B cell (primary cell): ENCODE measurements at regions of chr12 and their contacts with region 1.

Region 1: DNA sequence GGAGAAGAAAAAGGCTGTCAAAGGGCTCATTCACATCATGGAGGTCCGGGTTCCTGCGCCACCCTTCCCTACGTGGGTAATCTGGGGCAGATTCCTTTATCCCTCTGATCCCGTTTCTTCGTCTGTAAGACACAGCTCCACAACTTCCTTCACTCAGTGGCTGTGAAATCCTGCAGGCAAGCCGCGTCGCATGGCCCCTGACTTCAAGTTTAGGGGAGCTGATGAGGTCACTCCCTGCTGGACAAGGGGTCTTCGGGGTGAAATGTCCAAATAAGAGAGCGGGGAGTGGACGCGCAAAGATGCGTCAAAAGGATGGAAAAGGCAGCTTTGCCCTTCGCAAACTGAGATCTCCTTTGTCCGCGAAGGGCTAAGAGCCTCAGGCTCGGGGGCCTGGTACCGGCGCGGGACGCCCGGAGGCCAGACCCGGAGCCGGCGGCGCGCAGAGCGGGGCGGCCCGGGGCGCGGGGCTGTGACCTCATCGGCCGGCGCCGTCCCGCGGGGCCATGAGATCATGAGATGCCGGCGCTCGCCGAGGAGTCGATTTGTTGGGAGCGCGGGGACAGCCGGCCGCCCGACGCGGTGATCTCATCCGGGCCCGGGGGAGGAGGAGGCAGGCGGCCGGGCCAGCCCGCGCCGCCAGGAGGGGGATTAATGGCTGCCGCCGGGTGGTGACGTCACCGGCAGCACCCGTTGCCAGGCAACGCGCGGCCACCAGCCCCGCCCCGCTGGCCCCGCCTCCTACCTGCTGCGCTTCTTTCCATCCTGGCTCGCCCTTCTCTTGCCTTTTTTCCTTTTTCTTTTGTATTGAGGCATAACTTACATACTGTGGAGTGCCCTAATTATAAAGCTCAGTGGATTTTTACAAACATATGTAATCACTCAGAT is 62.1 kb downstream of the HRK start:
- DNase-seq: peak; percentile 95
- ATAC-seq: peak; percentile 84
- H3K4me3 ChIP-seq: peak overlapping the region; percentile 82 to 96 (median 95)
- H3K4me3 Mint-ChIP-seq: peak overlapping the region; percentile 87
- H3K27ac ChIP-seq: peak overlapping the region; percentile 93 to 94
- H3K27ac Mint-ChIP-seq: peak overlapping the region; percentile 93
- H3K4me1 ChIP-seq: peaks cover 47 to 49% of the 10 kb centered on the region in 2 donors
- H3K4me1 Mint-ChIP-seq: peaks cover 59% of the 10 kb centered on the region
- H3K27me3 ChIP-seq: no peaks in the 10 kb centered on the region
- H3K27me3 Mint-ChIP-seq: no peaks in the 10 kb centered on the region
- CTCF ChIP-seq: no peak

Region 2: DNA sequence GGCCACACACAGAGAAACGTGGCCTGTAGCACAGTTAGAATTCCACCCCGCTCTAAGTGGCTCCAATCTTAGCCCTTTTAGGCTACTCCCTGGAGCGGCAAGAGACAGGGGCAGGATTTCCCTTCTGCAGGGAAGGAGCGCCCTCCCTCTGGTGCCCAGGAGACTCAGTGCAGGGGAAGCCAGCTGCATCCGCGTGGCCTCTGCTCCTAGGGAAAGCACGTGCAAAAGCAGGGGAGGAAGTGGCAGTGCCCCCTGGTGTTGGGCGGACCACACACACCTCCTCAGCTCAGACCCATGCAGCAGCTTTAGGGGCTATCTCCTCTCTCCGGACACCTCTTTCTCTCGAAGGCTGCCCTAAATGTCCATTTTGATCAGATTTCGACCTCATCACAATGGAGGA is 131.3 kb before region 1 on chr12:
- CTCF ChIA-PET with region 1: no interaction called
- POLR2A ChIA-PET with region 1: no interaction called
- intact Hi-C with region 1: no loop called
- DNase-seq: peak; percentile 63
- ATAC-seq: peak; percentile 85
- H3K4me3 ChIP-seq: peak overlapping the region in 1 of 5 experiments; percentile 23
- H3K4me3 Mint-ChIP-seq: peak overlapping the region; percentile 39
- H3K27ac ChIP-seq: no peak overlapping the region
- H3K27ac Mint-ChIP-seq: no peak overlapping the region
- H3K4me1 ChIP-seq: peaks cover 11 to 16% of the 10 kb centered on the region in 2 donors
- H3K4me1 Mint-ChIP-seq: peaks cover 11% of the 10 kb centered on the region
- H3K27me3 ChIP-seq: peaks cover 0 to 8% (median 6%) of the 10 kb centered on the region in 4 experiments
- H3K27me3 Mint-ChIP-seq: peaks cover 5% of the 10 kb centered on the region
- CTCF ChIP-seq: peak; percentile 61

Region 3: DNA sequence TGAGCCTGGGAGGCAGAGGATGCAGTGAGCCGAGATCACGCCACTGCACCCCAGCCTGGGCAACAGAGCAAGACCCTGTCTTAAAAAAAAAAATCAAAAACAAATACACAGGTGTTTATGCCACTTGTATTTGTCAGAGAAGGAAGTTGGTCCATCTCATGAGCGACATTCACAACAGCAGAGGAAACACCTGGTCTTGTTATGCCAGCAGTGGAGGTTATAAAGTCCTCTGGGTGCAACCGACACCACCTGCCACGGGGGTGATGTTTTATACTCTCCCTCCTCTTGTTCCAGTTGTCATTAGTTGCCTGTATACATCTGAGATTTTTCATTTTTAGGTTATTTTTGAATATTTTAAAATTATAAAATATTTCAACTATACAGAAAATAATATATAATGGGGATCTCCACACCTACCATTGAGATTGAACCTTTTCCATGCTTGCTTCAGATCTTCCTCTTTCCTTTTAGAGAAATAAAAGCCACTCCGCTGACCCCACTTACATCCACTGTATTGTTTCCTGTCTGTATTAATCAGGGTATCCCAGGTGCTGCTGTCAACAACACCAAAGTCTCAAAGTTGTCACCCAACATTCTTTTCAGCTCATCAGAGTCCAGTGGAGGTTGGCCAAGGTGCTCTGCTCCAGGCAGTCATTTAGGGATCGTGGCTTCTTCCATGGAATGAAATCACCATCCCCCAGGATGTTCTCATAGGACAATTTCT is 16.0 kb before region 1 on chr12:
- CTCF ChIA-PET with region 1: interaction called, 6 read pairs
- POLR2A ChIA-PET with region 1: interaction called, 9 read pairs
- intact Hi-C with region 1: loop called (anchors 1 kb)
- DNase-seq: peak; percentile 80
- ATAC-seq: peak; percentile 85
- H3K4me3 ChIP-seq: peak overlapping the region in 1 of 5 experiments; percentile 22
- H3K4me3 Mint-ChIP-seq: peak overlapping the region; percentile 59
- H3K27ac ChIP-seq: peak overlapping the region; percentile 92 to 93
- H3K27ac Mint-ChIP-seq: peak overlapping the region; percentile 95
- H3K4me1 ChIP-seq: peaks cover 33 to 46% of the 10 kb centered on the region in 2 donors
- H3K4me1 Mint-ChIP-seq: peaks cover 51% of the 10 kb centered on the region
- H3K27me3 ChIP-seq: no peaks in the 10 kb centered on the region
- H3K27me3 Mint-ChIP-seq: no peaks in the 10 kb centered on the region
- CTCF ChIP-seq: no peak

Region 4: DNA sequence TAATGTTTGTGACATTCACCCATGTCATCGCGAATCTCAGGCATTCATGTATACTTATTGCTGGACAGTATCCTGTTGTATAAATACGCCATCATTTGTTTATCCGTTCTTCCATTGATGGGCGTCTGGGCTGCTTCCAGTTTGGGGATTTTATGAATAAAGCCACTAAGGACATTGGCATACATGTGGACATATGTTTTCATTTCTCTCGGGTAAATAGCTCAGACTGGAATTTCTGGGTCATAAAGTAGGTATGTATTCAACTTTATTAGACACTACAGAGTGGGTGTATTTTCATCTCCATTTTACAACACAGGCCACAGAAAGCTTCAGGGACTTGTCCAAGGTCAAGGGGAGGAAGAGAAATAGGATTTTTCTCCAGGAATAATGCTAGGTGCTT is 13.2 kb after region 1 on chr12:
- CTCF ChIA-PET with region 1: no interaction called
- POLR2A ChIA-PET with region 1: no interaction called
- intact Hi-C with region 1: no loop called
- DNase-seq: no peak
- ATAC-seq: no peak
- H3K4me3 ChIP-seq: no peak overlapping the region
- H3K4me3 Mint-ChIP-seq: no peak overlapping the region
- H3K27ac ChIP-seq: no peak overlapping the region
- H3K27ac Mint-ChIP-seq: no peak overlapping the region
- H3K4me1 ChIP-seq: peaks cover 0 to 4% of the 10 kb centered on the region in 2 donors
- H3K4me1 Mint-ChIP-seq: peaks cover 2% of the 10 kb centered on the region
- H3K27me3 ChIP-seq: no peaks in the 10 kb centered on the region
- H3K27me3 Mint-ChIP-seq: no peaks in the 10 kb centered on the region
- CTCF ChIP-seq: no peak

Region 5: GRCh38 chr12:116861320-116861719 is 42.1 kb after region 1 on chr12:
- CTCF ChIA-PET with region 1: interaction called, 8 read pairs
- POLR2A ChIA-PET with region 1: interaction called, 3 read pairs
- intact Hi-C with region 1: loop called (anchors 1 kb)
- DNase-seq: peak; percentile 77
- ATAC-seq: peak; percentile 67
- H3K4me3 ChIP-seq: no peak overlapping the region
- H3K4me3 Mint-ChIP-seq: peak overlapping the region; percentile 78
- H3K27ac ChIP-seq: no peak overlapping the region
- H3K27ac Mint-ChIP-seq: peak overlapping the region; percentile 86
- H3K4me1 ChIP-seq: peaks cover 21 to 53% of the 10 kb centered on the region in 2 donors
- H3K4me1 Mint-ChIP-seq: peaks cover 65% of the 10 kb centered on the region
- H3K27me3 ChIP-seq: no peaks in the 10 kb centered on the region
- H3K27me3 Mint-ChIP-seq: no peaks in the 10 kb centered on the region
- CTCF ChIP-seq: no peak

Region 6: DNA sequence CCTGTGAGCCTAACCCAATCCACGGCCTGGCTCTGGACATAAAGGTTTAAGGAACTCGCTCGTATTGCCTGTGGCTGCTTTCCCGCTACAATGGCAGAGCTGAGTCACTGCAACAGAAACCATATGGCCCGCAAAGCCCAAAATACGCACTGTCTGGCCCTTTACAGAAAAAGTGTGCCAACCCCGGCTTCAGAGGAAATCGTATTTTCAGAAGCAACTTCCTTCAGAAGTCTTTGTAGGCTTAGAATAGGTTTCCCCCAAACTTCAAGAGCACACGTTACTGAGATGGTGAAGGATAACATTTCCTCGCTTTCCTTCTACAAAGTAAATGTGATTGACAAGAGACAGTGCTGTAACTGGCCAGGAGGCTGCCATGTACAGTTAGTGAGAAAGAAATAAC is 314.9 kb after region 1 on chr12:
- CTCF ChIA-PET with region 1: no interaction called
- POLR2A ChIA-PET with region 1: interaction called, 13 read pairs
- intact Hi-C with region 1: no loop called
- DNase-seq: no peak
- ATAC-seq: no peak
- H3K4me3 ChIP-seq: no peak overlapping the region
- H3K4me3 Mint-ChIP-seq: no peak overlapping the region
- H3K27ac ChIP-seq: no peak overlapping the region
- H3K27ac Mint-ChIP-seq: no peak overlapping the region
- H3K4me1 ChIP-seq: no peaks in the 10 kb centered on the region
- H3K4me1 Mint-ChIP-seq: peaks cover 4% of the 10 kb centered on the region
- H3K27me3 ChIP-seq: no peaks in the 10 kb centered on the region
- H3K27me3 Mint-ChIP-seq: no peaks in the 10 kb centered on the region
- CTCF ChIP-seq: no peak